Activated CD8-positive, alpha-beta T cell treated with anti-CD3 and anti-CD28 coated beads for 36 hours (primary cell): ENCODE measurements at regions of chr4 and their contacts with region 1.

Region 1: DNA sequence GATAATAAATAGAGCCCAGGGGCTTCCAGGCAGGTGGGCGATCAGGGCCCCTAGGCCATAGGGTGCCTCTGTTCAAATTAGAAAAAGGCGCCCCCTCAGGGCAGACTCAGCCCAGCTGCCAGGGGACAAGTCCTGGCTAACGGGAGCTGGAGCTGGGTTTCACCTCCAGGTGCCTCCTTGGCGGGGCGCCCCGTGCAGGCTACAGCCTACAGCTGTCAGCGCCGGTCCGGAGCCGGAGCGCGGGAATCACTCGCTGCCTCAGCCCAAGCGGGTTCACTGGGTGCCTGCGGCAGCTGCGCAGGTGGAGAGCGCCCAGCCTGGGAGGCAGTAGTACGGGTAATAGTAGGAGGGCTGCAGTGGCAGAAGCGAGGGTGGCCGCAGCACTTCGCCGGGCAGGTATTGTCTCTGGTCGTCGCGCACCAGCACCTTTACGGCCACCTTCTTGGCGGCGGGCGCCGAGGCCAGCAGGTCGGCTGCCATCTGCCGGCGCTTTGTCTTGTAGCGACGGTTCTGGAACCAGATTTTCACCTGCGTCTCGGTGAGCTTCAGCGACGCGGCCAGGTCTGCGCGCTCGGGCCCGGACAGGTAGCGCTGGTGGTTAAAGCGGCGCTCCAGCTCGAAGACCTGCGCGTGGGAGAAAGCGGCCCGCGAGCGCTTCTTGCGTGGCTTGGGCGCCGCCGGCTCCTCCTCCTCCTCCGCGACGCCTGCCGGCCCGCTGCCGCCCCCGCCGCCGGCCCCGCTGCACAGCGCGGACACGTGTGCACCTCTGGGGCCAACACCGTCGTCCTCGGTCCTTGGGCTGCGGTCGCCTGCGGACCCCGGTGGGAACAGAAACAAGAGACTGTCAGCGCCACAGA is 2.4 kb downstream of the NKX3-2 start:
- DNase-seq: peak; percentile 56
- ATAC-seq: peak; percentile 5
- H3K4me3 Mint-ChIP-seq: peak overlapping the region; percentile 40
- H3K27ac Mint-ChIP-seq: no peak overlapping the region
- H3K4me1 Mint-ChIP-seq: peaks cover 57% of the 10 kb centered on the region
- H3K27me3 Mint-ChIP-seq: peaks cover 77% of the 10 kb centered on the region
- CTCF ChIP-seq: peak; percentile 27

Region 2: GRCh38 chr4:13236485-13236884 is 305.5 kb before region 1 on chr4:
- CTCF ChIA-PET with region 1: no interaction called
- POLR2A ChIA-PET with region 1: no interaction called
- intact Hi-C with region 1: no loop called
- DNase-seq: no peak
- ATAC-seq: no peak
- H3K4me3 Mint-ChIP-seq: no peak overlapping the region
- H3K27ac Mint-ChIP-seq: no peak overlapping the region
- H3K4me1 Mint-ChIP-seq: peaks cover 7% of the 10 kb centered on the region
- H3K27me3 Mint-ChIP-seq: no peaks in the 10 kb centered on the region
- CTCF ChIP-seq: no peak

Region 3: DNA sequence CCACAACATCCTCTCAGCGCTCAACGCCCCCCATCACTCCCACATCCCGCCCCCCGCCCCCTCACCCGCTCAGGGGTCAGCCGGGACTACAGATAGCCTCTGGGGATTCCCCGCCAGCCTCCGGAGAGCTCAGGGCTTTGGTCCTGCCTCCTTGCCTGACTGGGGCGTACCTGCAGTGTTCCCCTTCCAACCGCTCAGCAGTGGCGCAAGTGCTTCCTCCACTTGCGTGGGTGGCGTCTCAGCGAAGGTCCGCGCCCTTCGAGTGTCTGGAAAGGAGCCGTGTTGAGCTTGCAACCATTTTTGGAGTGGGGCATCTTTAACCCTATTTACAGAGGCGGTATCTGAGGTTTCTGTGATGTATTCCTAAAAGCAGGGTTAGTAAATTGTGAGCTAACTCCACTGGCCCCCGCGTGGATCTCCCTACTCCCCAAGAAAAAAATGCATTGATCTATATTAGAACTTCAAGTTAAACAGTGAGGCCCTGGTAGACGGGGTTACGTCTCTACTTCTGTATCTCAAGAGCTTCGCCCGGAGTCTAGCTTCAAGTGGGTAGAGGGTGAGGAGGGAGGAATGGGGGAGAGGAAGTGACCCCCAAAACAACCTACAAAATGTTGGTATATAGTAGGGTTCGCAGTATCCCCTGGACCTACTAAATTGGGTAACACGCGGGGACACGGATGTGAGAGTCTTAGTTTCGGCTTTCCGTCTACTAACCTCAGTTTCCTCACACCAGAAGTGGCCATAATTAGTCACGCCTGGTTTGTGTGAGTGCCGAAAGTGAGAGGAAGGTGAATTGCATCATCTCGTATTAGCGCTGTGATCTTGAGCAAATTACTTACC is 13.7 kb before region 1 on chr4:
- CTCF ChIA-PET with region 1: interaction called, 31 read pairs
- POLR2A ChIA-PET with region 1: interaction called, 5 read pairs
- intact Hi-C with region 1: no loop called
- DNase-seq: peak; percentile 60
- ATAC-seq: peak; percentile 76
- H3K4me3 Mint-ChIP-seq: peak overlapping the region; percentile 41
- H3K27ac Mint-ChIP-seq: peak overlapping the region; percentile 53
- H3K4me1 Mint-ChIP-seq: peaks cover 37% of the 10 kb centered on the region
- H3K27me3 Mint-ChIP-seq: peaks cover 86% of the 10 kb centered on the region
- CTCF ChIP-seq: no peak

Region 4: DNA sequence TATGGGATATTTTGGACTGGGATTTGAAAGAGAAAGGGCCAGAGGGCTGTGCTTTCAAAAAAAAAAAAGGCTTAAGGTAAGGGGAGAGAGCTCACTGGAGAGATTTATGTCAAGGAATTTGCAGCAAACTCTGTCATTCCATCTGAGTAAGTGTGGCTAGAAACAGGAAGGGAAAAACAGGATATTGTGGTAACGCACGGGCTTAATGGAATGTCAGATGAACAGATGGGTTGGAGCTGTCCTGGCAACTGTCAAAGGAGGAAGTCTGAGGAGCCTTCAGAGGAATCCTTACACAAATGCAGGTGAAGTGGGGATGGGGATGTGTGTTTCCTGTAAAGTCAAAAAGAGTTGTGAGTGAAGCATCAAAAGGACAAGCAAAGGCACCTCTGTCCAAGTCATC is 17.5 kb after region 1 on chr4:
- CTCF ChIA-PET with region 1: no interaction called
- POLR2A ChIA-PET with region 1: no interaction called
- intact Hi-C with region 1: no loop called
- DNase-seq: no peak
- ATAC-seq: no peak
- H3K4me3 Mint-ChIP-seq: no peak overlapping the region
- H3K27ac Mint-ChIP-seq: no peak overlapping the region
- H3K4me1 Mint-ChIP-seq: no peaks in the 10 kb centered on the region
- H3K27me3 Mint-ChIP-seq: peaks cover 6% of the 10 kb centered on the region
- CTCF ChIP-seq: no peak

Region 5: DNA sequence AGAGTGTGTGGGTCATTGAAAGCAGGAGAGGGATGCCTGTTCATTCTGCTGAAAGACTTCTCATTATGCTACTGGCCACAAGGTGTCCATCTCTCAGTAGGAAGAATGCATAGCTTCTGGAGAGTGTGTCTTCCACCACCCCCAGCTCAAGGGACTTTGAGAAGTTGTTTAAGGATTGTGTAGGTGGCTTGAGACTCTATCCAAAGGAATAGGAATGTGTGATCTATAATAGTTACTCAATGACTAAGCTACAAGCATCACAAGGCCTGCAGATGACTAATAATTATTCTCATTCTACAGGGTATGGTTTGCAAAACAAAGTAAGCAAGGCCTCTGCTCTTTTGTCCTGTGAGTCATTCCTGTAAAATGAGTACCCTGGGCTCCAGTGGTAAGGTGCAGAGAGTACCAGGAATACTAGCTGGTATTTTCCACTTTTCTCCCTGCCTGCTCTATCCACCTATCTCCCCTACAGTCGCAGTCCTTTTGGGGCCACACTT is 365.4 kb after region 1 on chr4:
- CTCF ChIA-PET with region 1: no interaction called
- POLR2A ChIA-PET with region 1: no interaction called
- intact Hi-C with region 1: no loop called
- DNase-seq: no peak
- ATAC-seq: no peak
- H3K4me3 Mint-ChIP-seq: no peak overlapping the region
- H3K27ac Mint-ChIP-seq: no peak overlapping the region
- H3K4me1 Mint-ChIP-seq: no peaks in the 10 kb centered on the region
- H3K27me3 Mint-ChIP-seq: no peaks in the 10 kb centered on the region
- CTCF ChIP-seq: no peak